Heart right ventricle (tissue), 16 donors: ENCODE measurements at regions of chr18 and their contacts with region 1.

Region 1: DNA sequence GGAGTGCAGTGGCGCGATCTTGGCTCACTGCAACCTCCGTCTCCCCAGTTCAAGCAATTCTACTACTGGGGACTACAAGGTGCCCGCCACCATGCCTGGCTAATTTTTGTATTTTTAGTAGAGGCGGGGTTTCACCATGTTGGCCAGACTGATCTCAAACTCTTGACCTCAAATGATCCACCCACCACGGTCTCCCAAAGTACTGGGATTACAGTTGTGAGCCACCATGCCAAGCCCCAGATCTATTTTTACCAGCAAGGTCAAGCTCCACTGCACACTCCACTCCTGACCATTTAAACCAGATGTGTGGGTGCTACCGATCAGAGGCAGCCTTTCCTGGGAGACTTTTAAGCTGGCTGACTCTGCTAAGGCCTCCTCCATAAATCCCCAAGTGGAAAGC is 67.5 kb upstream of the CD226 start:
- DNase-seq: peak in 1 of 2 donors; percentile 24
- ATAC-seq: peak; percentile 38 to 94 (median 87)
- H3K4me3 ChIP-seq: no peak overlapping the region
- H3K27ac ChIP-seq: peak overlapping the region in 8 of 10 donors; percentile 20 to 66 (median 45)
- H3K4me1 ChIP-seq: peaks cover 0 to 19% (median 9%) of the 10 kb centered on the region in 9 donors
- H3K27me3 ChIP-seq: no peaks in the 10 kb centered on the region
- CTCF ChIP-seq: no peak

Region 2: GRCh38 chr18:69968039-69968438 is 47.1 kb before region 1 on chr18:
- intact Hi-C with region 1: loop called in 1 of 10 experiments (anchors 1 kb)
- DNase-seq: no peak
- ATAC-seq: no peak
- H3K4me3 ChIP-seq: no peak overlapping the region
- H3K27ac ChIP-seq: no peak overlapping the region
- H3K4me1 ChIP-seq: no peaks in the 10 kb centered on the region
- H3K27me3 ChIP-seq: no peaks in the 10 kb centered on the region
- CTCF ChIP-seq: no peak

Region 3: GRCh38 chr18:70036771-70037347 is 21.7 kb after region 1 on chr18:
- intact Hi-C with region 1: no loop called
- DNase-seq: no peak
- ATAC-seq: peak in 3 of 8 donors; percentile 31 to 68 (median 50)
- H3K4me3 ChIP-seq: no peak overlapping the region
- H3K27ac ChIP-seq: no peak overlapping the region
- H3K4me1 ChIP-seq: no peaks in the 10 kb centered on the region
- H3K27me3 ChIP-seq: no peaks in the 10 kb centered on the region
- CTCF ChIP-seq: no peak